Right cardiac atrium (tissue), 5 donors: ENCODE measurements at regions of chr17 and their contacts with region 1.

Region 1: DNA sequence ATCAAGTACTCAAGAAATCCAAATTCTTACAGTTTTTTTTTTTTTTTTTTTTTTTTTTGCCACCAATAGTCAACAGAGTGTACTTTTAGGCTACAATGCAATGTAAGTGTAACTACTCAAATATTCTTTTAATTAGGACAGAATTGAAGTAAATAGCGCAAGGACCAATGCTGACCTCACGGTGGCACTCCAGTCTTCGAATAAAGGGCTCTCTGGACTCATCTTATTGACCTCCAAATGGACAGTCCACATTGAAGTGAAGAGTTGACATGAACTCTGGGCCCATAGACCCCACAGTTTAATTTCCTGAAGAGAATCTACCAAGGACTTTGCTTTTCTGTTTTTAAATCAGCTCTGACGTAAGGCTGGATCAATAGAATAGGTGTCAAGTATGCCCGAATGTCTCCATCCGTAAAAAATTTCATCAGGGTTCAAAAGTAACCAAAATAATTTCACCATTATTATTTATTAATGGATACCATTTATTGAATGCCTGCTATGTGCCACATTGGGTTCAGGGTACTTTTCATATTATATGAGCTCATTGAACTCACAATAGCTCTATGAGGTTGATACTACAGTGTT is 7.3 kb upstream of the DDX52 start:
- DNase-seq: peak in 1 of 3 donors; percentile 50
- ATAC-seq: peak in 1 of 2 donors; percentile 38
- H3K4me3 ChIP-seq: no peak overlapping the region
- H3K27ac ChIP-seq: no peak overlapping the region
- H3K4me1 ChIP-seq: no peaks in the 10 kb centered on the region
- H3K27me3 ChIP-seq: no peaks in the 10 kb centered on the region

Region 2: GRCh38 chr17:37770631-37771518 is 120.4 kb after region 1 on chr17:
- intact Hi-C with region 1: loop called in 2 of 4 experiments (anchors 5 to 10 kb)
- DNase-seq: peak; percentile 24 to 73 (median 61)
- ATAC-seq: peak; percentile 24 to 48
- H3K4me3 ChIP-seq: no peak overlapping the region
- H3K27ac ChIP-seq: no peak overlapping the region
- H3K4me1 ChIP-seq: no peaks in the 10 kb centered on the region
- H3K27me3 ChIP-seq: peaks cover 5% of the 10 kb centered on the region

Region 3: GRCh38 chr17:37818689-37819088 is 168.2 kb after region 1 on chr17:
- intact Hi-C with region 1: loop called in 2 of 4 experiments (anchors 5 to 10 kb)
- DNase-seq: no peak
- ATAC-seq: no peak
- H3K4me3 ChIP-seq: no peak overlapping the region
- H3K27ac ChIP-seq: no peak overlapping the region
- H3K4me1 ChIP-seq: no peaks in the 10 kb centered on the region
- H3K27me3 ChIP-seq: no peaks in the 10 kb centered on the region